ENCODE measurements at regions of chr10 and their contacts with region 1.

Region 1: DNA sequence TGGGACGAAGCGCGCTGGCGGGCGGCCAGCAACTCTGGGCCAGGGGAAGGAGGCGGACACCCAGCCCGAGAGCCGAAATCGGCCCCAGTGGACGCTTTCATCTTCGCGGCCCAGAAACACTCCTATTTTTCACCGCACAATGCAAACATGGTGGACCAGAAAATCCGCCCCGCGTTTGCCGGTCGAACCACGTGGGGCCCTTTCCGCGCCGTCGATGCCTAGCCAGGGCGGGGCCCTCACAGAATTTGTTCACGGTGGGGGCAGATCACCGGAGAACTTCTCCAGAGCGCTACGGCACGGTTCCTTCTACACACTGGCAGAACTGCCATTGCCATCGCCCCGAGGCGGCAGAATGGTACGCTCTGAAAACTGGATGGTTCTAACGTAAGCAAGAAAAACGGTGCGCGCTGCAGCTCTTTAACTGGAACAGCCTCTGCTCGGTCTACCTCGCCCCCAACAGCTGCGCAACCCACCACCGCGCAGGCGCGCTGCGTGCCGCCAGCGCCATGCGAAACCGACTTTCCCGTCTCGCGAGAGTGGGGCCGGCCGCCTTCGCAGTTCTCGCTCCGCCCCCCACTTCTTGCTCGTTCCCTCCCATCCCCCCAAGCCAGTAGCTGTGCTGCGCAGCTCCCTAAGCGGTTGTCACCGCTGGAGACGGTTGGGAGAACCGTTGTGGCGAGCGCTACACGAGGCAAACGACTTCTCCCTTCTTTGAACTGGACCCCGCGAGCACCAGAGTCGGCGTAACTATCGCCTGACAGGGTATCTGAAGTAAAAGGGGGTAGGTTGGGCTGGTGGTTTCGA is at the start of gene HNRNPH3:
- DNase-seq: peak; percentile 100
- H3K4me3 Mint-ChIP-seq: peak within 1 kb of the TSS; percentile 99
- H3K27ac Mint-ChIP-seq: peak within 1 kb of the TSS; percentile 100
- H3K4me1 Mint-ChIP-seq: peaks cover 47% of the 10 kb centered on the region
- H3K27me3 Mint-ChIP-seq: peaks cover 2% of the 10 kb centered on the region
- total RNA-seq, gene HNRNPH3: 200 and 206 TPM in 2 replicates

Region 2: DNA sequence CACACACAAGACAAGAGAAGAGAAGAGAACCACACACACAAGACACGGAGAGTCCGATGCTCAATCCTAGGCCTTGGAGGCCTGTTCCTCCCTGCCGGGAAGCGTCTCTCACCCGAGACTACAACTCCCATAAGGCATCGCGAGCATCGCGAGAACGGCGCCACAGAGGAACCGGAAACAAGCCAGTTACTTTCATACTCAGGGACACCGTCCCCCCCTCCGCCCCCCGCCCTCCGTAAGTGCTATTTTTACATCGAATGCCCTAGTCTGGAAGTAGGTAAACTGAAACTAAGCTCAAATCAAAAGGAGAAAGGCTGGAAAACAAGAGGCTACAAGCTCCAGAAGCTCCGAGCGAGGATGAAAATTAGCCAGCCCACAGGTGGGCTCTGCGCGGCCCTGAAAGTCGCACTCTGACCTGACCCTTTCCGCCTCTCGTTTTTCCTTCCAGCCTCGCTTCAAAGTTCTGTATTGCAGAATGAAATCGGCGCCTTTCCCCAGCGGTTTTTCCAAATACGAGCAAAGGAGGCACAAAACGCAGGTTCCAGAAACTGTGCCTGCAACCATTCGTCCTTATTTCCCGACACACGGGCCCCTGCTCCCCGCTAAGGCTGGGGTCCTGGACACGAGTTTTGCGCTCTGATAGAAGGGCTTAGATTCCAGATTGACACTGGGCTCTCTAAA is 482.2 kb before region 1 on chr10:
- intact Hi-C with region 1: loop called (anchors 10 kb)
- DNase-seq: peak; percentile 99
- H3K4me3 Mint-ChIP-seq: peak overlapping the region; percentile 90
- H3K27ac Mint-ChIP-seq: peak overlapping the region; percentile 92
- H3K4me1 Mint-ChIP-seq: peaks cover 8% of the 10 kb centered on the region
- H3K27me3 Mint-ChIP-seq: no peaks in the 10 kb centered on the region

Region 3: DNA sequence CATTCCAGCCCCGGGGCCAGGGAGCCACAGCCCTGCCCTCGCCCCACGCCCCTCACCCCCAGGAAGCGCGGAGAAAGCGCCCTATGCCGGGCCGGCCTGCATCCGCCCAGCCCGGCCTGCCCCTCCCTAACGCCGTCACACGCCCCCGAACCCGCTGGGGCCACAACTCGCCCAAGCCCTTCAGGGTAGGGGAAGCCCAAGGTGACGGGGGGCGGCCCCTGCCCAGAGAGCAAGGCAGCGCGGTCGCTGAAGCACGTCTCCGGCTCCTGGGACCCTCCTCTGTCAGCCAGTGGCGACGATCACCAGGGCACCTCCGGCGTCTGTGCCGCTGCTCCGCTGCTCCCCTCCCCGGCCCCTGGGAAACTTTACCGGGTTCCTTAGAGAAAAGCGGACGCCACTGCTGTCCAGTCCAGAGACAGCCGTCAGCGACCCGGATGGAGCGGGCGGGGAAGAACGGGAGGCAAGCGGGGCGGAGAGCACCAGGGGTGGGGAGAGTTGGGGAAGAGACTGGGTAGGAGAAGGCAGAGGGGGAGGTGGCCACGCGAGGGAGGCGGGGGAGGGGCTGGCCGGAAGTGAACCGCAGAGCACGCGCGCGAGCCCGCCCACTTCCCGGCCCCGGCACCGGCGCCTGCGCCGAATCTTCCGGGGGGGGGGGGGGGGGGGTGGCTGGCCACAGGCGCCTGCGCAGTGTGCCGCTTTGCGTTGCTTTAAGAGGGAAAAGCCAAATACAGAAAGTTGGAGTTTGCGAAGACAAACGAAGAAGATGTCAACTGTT is 256.7 kb before region 1 on chr10 and contains the start of gene HERC4:
- intact Hi-C with region 1: loop called (anchors 1 kb)
- DNase-seq: peak; percentile 96
- H3K4me3 Mint-ChIP-seq: peak within 1 kb of the TSS; percentile 94
- H3K27ac Mint-ChIP-seq: peak within 1 kb of the TSS; percentile 91
- H3K4me1 Mint-ChIP-seq: peaks cover 31% of the 10 kb centered on the region
- H3K27me3 Mint-ChIP-seq: no peaks in the 10 kb centered on the region
- total RNA-seq, gene HERC4: 45.2 and 49.1 TPM in 2 replicates

Region 4: GRCh38 chr10:68231106-68231816 is 100.4 kb before region 1 on chr10:
- intact Hi-C with region 1: no loop called
- DNase-seq: peak; percentile 82
- H3K4me3 Mint-ChIP-seq: peak overlapping the region; percentile 83
- H3K27ac Mint-ChIP-seq: no peak overlapping the region
- H3K4me1 Mint-ChIP-seq: peaks cover 6% of the 10 kb centered on the region
- H3K27me3 Mint-ChIP-seq: peaks cover 50% of the 10 kb centered on the region

Region 5: DNA sequence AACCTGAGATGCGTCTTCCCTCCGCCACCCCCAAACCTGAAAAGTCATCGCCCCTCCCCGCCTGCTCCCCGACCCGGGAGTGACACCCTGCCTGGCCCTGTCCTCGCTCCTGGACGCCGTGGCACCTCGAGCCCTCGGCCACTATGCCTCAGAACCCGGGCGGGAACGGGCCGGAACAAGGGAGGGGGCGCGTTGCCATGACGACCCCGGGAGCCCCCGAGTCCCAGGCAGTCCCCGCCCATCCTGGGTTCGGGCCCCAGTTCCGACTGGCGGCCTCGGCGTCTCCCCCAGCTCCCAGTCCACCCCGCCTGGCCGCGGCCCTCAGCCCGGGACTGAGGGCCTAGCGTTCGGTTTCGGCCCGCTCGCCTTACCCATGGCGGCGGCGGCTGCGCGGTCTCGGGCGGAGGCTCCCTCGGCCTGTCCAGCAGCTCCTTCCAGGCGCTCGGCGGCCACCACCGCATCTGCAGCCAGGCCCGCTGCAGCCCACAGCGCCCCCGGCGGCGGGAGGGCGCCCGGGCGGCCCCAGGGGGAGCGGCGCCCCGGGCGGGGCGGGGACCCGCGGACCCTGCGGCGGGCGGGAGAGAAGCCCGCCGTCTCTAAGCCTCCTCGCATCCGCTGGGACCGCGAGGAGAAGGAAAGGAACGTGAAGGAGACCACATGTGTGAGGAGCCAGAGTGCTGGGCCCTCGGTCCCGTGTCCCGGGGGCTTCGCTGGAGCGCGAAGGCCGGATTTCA is 75.3 kb after region 1 on chr10 and contains the start of gene RUFY2:
- intact Hi-C with region 1: loop called (anchors 5 kb)
- DNase-seq: peak; percentile 95
- H3K4me3 Mint-ChIP-seq: peak within 1 kb of the TSS; percentile 93
- H3K27ac Mint-ChIP-seq: peak within 1 kb of the TSS; percentile 88
- H3K4me1 Mint-ChIP-seq: peaks cover 19% of the 10 kb centered on the region
- H3K27me3 Mint-ChIP-seq: no peaks in the 10 kb centered on the region
- total RNA-seq, gene RUFY2: 9.5 and 10.3 TPM in 2 replicates

Region 6: DNA sequence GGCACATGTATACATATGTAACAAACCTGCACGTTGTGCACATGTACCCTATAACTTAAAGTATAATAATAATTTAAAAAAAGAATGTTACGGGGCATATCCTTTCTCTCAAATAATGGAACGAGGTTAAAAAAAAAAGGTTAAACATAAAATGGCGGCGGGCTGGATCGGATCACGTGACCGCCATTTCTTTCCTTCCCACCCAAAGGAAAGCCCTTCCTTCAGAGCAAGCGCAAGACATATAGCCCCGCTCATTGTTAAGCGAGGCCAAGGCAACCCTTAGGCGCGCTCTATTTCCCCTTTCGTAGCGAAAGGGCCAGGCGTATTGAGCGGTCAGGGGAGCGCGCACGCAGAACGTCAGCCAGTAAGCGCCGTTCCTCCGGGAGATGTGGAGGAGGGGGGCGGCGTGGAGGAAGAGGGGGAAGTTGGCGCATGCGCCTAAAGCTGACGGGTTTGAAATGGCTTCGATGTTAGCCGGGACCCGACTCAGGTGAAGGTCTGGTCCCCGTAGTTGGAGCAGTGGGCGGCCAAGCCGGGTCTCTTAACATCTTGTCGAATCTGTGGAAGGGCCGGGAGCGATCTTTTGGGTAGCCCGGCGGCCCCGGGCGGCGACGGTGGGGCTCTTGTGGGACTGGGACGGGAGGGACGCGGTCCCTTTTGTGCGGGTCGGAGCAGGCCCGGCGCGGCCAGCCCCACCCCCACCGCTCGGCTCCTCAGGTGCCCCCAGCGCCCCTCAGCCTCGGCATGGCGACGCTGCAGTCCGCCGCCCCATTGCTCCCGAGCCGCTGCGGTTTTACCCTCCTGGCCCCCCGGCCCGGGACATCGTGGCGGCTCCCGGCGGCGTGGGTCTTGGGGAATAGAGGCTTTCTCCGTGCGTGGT is 389.4 kb after region 1 on chr10 and contains the start of gene CCAR1:
- intact Hi-C with region 1: loop called (anchors 2 kb)
- DNase-seq: peak; percentile 98
- H3K4me3 Mint-ChIP-seq: peak within 1 kb of the TSS; percentile 95
- H3K27ac Mint-ChIP-seq: peak within 1 kb of the TSS; percentile 98
- H3K4me1 Mint-ChIP-seq: peaks cover 14% of the 10 kb centered on the region
- H3K27me3 Mint-ChIP-seq: no peaks in the 10 kb centered on the region
- total RNA-seq, gene CCAR1: 95.2 and 112 TPM in 2 replicates

Region 7: DNA sequence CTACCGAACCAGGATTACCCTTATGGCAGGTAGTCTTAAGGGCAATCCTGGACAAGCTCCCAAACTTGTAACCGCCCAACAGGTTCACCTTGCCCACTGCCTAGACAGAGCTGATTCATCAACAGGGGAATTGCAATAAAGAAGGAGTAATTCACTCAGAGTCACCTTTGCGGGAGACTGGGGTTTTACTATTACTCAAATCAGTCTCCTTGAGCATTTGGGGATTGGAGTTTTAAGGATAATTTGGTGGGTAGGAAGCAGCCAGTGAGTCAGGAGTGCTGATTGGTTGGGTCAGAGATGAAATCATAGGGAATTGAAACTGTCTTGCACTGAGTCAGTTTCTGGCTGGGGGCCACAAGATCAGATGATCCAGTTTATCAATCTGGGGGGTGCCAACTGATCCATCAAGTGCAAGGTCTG is 972.0 kb after region 1 on chr10:
- intact Hi-C with region 1: no loop called
- DNase-seq: no peak
- H3K4me3 Mint-ChIP-seq: no peak overlapping the region
- H3K27ac Mint-ChIP-seq: no peak overlapping the region
- H3K4me1 Mint-ChIP-seq: peaks cover 2% of the 10 kb centered on the region
- H3K27me3 Mint-ChIP-seq: peaks cover 10% of the 10 kb centered on the region